ENCODE measurements at regions of chr11 and their contacts with region 1.

Region 1: DNA sequence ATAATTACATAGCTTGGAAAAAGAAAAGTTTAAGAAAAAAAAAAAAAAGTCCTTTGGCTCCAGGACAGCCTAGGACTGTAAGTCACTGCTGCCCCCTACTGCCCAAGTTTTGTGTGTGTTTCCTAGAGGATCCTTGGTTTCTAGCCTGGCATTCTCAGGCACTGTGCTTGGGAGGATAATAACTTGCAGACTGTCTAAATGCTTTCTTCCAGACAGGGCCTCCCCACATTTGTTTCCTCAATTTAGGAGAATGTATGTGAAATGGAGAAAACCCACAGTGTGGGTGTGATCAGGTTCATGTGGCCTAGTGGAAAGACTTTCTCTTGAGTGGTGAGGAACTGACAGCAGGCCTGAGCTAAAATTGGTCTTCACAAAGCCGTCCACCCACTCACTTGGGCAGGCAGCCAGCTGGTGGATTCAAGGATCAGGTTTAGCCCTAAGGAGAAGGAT is 191.0 kb downstream of the NAV2 start:
- DNase-seq: peak; percentile 50 to 94 (median 77)

Region 2: GRCh38 chr11:19561011-19561410 is 342.6 kb before region 1 on chr11:
- intact Hi-C with region 1: loop called (anchors 1 kb)
- DNase-seq: peak in 1 of 10 donors; percentile 77

Region 3: DNA sequence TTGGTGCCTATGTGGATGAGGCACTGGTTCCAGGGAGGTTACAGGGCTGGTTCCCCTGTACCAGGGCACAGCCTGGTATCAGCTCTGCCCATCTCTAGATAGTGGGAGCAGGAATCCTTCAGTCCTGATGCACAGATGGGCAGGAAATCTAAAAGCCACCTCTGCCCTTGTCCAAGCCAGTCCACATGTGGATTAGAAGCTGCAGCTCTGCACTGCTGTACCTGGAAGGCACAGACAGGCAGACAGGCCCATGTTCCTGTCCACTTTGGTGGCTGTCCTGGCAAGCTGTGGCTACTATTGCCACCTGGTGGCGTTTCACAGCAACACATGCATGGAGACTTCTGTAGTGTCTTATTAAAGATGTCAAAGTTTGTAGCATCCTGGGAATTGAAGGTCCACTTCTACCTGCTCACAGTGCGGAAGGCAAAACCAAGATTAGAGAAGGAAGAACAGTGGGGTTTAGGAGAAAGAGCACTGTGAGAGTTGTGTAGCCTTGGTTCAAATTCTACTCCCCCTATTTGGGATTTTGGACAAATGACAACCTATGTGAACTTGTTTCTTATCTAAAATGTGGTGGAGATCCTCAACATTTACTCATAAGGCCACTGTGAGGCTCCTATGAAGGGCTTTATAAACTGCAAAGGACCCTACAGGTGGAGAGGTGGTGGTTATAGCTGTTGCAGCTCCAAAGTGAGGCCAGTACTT is 160.9 kb before region 1 on chr11:
- intact Hi-C with region 1: loop called (anchors 10 kb)
- DNase-seq: peak; percentile 75 to 98 (median 88)

Region 4: GRCh38 chr11:19814421-19814820 is 89.2 kb before region 1 on chr11:
- intact Hi-C with region 1: loop called (anchors 5 kb)
- DNase-seq: no peak

Region 5: DNA sequence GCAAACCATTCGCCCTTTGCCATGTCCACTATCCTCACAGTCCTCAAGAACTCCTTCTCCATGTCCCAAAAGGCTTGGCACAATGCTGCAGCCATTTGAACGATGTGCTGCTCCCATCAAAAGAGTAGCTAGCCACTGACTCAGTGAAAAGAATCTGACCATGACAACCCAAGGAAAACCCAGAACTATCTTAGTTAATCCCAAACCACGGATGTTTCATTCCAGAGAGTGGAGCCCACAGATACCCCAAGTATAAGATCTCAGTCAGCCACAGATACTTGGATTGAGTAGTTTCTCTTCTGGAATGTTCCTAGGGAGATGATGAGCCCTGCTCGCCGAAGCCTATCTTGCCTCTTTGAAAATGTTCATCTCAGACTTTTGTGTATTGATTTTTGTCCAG is 14.1 kb before region 1 on chr11:
- intact Hi-C with region 1: no loop called
- DNase-seq: no peak

Region 6: GRCh38 chr11:19951558-19952115 is 48.0 kb after region 1 on chr11:
- intact Hi-C with region 1: loop called (anchors 10 kb)
- DNase-seq: no peak

Region 7: DNA sequence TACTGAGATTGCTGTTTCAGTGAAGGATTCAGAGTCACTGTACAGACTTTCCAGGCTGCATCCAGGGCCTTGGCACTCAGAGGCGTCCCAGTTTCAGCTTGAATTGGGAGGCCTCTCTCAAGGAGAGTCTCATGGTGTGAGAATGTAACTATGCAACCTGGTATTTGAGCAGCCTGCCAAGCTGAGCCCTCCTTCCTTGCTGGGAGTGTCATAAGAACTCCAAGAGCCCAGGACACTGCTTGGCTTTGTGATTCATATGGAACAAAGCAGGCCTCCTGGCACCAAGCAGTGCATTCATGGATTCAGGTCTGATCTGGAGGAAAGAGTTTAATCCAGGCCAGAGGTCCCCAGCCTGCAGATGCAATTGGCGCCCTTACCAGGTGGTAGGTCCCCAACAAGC is 85.0 kb after region 1 on chr11:
- intact Hi-C with region 1: no loop called
- DNase-seq: peak in 7 of 10 donors; percentile 19 to 82 (median 46)

Region 8: GRCh38 chr11:20022363-20023081 is 118.9 kb after region 1 on chr11:
- intact Hi-C with region 1: no loop called
- DNase-seq: no peak